ENCODE measurements at regions of chr1 and their contacts with region 1.

Region 1: DNA sequence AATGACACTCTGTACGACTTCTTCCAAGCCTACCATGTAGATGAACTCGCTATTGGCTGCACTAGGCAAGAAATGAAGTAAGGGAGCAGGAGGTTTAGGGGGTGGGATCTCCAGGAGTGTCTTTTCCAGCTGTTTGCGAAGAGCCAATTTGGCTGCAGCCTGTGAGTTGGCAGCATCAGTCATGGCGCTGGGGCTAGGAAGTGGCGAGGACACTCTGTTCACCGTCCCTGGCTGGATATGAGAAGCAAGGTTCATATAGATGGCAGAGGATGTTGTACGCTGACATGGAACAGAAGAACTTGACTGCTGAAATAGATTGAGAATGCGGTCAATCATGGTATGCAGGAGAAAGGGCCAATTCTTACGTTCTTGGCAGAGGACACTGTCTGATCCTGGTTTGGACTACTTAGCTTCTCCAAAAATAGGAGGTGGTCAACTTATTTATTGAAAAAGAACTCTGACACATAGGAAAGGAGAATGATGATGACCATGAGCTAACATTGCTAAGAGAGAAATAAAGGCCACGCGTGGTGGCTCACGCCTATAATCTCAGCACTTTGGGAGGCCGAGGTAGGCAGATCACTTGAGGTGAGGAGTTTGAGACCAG is 41.2 kb downstream of the SLC27A3 start:
- DNase-seq: no peak
- ATAC-seq: no peak
- H3K4me3 ChIP-seq: no peak overlapping the region
- H3K27ac ChIP-seq: no peak overlapping the region
- H3K4me1 ChIP-seq: no peaks in the 10 kb centered on the region
- H3K27me3 ChIP-seq: no peaks in the 10 kb centered on the region
- CTCF ChIP-seq: no peak

Region 2: GRCh38 chr1:153670859-153671627 is 145.3 kb before region 1 on chr1 and contains the start of gene ILF2:
- CTCF ChIA-PET with region 1: interaction called, 14 read pairs
- POLR2A ChIA-PET with region 1: no interaction called
- in situ Hi-C with region 1: no loop called
- intact Hi-C with region 1: no loop called
- DNase-seq: peak; percentile 100
- ATAC-seq: peak; percentile 94
- H3K4me3 ChIP-seq: peak within 1 kb of the TSS; percentile 85 to 96
- H3K27ac ChIP-seq: peak within 1 kb of the TSS; percentile 94
- H3K4me1 ChIP-seq: peaks cover 14% of the 10 kb centered on the region; the same call in 1 of the 2 replicates
- H3K27me3 ChIP-seq: no peaks in the 10 kb centered on the region
- CTCF ChIP-seq: peak; percentile 25; the same call in 1 of the 2 replicates
- total RNA-seq, gene ILF2: 221 TPM

Region 3: GRCh38 chr1:153749408-153750005 is 66.9 kb before region 1 on chr1:
- CTCF ChIA-PET with region 1: no interaction called
- POLR2A ChIA-PET with region 1: no interaction called
- in situ Hi-C with region 1: no loop called
- intact Hi-C with region 1: no loop called
- DNase-seq: peak; percentile 67
- ATAC-seq: peak; percentile 99
- H3K4me3 ChIP-seq: no peak overlapping the region
- H3K27ac ChIP-seq: no peak overlapping the region
- H3K4me1 ChIP-seq: no peaks in the 10 kb centered on the region
- H3K27me3 ChIP-seq: no peaks in the 10 kb centered on the region
- CTCF ChIP-seq: peak; percentile 96